ENCODE measurements at regions of chr19 and their contacts with region 1.

Region 1: DNA sequence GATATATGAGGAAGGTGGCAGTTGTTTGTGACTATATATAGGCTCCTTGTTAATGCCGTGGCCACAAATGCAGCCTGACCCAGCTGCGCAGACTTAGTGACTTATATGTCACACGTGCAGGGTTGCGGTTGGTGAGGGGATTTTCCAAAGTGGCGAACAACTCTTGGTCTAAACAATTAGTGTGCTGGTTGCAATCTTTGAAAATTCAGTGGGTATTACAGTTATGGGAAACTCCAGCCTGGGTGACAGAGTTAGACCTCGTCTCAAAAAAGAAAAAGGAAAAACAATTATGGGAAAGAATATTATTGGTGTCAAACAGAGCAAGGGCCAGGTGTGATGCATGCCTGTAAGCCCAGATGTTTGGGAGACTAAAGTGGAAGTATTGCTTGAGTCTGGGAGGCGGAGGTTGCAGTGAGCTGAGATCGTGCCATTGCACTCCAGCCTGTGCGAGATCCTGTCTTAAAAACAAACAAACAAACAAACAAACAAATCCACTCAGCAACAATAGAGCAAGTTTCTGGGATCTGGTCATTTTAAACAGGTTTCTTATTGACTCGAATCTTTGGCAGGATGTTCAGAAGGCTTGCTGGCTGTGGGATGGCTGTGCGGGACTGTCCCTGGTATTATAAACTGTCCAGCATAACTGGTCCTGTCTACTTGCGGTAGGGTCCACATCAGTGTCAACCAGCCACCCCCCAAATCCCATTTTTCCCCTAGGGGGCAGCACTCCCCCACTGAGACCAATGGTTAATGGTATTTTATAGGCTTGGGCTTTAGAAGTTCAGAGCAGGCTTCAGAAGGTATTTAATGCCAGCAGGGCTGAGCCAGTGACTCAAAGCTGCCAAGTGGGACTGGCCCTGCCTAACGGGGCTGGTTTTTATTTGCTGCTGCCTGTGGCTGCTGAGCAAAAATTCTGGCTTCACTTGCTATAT is 15.4 kb downstream of the RELB start:
- DNase-seq: peak; percentile 42
- ATAC-seq: peak; percentile 89
- H3K4me3 ChIP-seq: no peak overlapping the region
- H3K27ac ChIP-seq: no peak overlapping the region
- H3K4me1 ChIP-seq: peaks cover 5 to 10% of the 10 kb centered on the region in 2 experiments; a peak in 2 of 4 replicates
- H3K27me3 ChIP-seq: no peaks in the 10 kb centered on the region
- CTCF ChIP-seq: peak; percentile 78 to 86 (median 79)
- POLR2A ChIP-seq: no peak
- RAD21 ChIP-seq: peak; percentile 87

Region 2: DNA sequence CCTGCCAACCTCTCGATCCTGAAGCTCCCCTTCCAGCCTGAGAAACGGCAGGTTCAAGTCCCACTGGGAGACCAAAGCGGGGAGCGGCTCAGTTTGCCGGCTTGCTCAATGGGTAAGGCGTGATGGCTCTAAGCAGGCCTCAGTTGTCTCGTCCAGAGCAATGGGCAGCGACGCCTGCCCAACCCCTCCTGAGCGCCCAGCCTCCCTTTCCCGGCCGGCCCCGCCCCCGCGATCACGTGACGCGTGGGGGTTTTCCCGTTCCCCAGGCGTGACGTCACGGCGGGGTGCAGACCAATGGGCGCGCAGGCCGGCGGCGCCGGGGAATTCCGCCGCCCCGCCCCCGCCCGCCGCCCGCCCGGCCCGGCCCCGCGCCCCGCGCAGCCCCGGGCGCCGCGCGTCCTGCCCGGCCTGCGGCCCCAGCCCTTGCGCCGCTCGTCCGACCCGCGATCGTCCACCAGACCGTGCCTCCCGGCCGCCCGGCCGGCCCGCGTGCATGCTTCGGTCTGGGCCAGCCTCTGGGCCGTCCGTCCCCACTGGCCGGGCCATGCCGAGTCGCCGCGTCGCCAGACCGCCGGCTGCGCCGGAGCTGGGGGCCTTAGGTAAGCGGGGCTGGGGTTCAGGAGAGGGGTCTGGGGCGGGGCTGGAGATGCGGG is 15.4 kb before region 1 on chr19 and contains the start of gene RELB:
- CTCF ChIA-PET with region 1: no interaction called
- POLR2A ChIA-PET with region 1: no interaction called
- RAD21 ChIA-PET with region 1: no interaction called
- intact Hi-C with region 1: no loop called
- DNase-seq: peak; percentile 72
- ATAC-seq: peak; percentile 75
- H3K4me3 ChIP-seq: peak within 1 kb of the TSS; percentile 67 to 71
- H3K27ac ChIP-seq: peak within 1 kb of the TSS; percentile 76
- H3K4me1 ChIP-seq: peaks cover 12 to 16% of the 10 kb centered on the region in 2 experiments; a peak in 3 of 4 replicates
- H3K27me3 ChIP-seq: no peaks in the 10 kb centered on the region
- CTCF ChIP-seq: no peak
- POLR2A ChIP-seq: no peak
- RAD21 ChIP-seq: no peak
- total RNA-seq, gene RELB: 12.9 TPM

Region 3: DNA sequence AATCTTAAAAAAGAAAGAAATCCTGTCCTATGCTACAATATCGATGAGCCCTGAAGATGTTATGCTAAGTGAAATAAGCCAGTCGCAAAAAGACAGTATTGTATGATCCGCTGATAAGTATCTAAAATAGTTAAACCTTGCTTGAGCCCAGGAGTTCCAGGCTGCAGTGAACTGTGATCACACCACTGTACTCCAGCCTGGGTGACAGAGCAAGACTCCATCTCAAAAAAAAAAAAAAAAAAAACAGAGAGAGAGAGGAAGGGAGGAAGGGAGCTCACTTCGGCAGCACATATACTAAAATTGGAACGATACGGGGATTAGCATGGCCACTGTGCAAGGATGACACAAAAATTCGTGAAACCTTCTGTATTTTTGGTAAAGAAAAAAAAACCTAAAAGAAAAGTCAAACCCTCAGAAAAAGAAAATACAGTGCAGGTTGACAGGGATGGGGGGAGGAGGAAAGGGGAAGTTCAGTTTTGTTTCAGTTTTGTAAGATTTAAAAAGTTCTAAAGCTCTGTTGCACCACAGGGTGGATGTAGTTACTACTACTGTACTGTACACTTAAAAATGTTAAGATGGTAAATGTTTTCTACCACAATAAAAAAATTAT is 30.6 kb after region 1 on chr19:
- CTCF ChIA-PET with region 1: no interaction called
- POLR2A ChIA-PET with region 1: no interaction called
- RAD21 ChIA-PET with region 1: no interaction called
- intact Hi-C with region 1: no loop called
- DNase-seq: no peak
- ATAC-seq: no peak
- H3K4me3 ChIP-seq: no peak overlapping the region
- H3K27ac ChIP-seq: no peak overlapping the region
- H3K4me1 ChIP-seq: peaks cover 7 to 27% of the 10 kb centered on the region in 2 experiments
- H3K27me3 ChIP-seq: no peaks in the 10 kb centered on the region
- CTCF ChIP-seq: no peak
- POLR2A ChIP-seq: no peak
- RAD21 ChIP-seq: no peak

Region 4: DNA sequence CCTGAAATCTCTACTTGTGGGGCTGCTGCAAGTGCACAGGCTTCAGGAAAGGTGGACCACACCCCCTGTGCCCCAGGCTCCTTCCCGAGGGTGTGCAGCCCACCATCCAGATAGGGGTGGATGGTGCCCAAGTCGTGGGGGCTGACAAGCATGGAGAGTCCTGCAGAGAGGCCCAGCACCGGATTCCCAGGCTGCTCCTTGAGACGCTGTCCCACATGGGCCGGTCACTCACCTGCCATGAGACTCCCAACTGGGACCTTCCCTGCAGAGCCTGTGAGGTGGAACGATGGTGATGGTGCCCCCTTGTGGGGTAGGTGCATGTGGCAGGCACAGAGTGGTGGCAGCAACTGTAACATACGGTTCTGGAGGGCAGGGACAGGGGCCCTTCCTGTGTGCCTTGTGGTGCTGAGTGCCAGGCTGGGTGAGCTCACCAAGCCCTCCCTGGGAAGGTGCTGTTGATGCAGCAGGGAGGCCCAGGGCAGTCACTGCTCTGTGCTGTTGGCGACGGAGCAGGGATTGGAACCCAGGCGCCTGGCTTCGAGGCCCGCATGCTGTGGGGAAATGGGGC is 109.4 kb after region 1 on chr19:
- CTCF ChIA-PET with region 1: interaction called, 4 read pairs
- POLR2A ChIA-PET with region 1: no interaction called
- RAD21 ChIA-PET with region 1: no interaction called
- intact Hi-C with region 1: loop called (anchors 2 kb)
- DNase-seq: peak; percentile 24
- ATAC-seq: peak; percentile 95
- H3K4me3 ChIP-seq: no peak overlapping the region
- H3K27ac ChIP-seq: no peak overlapping the region; the same call in 1 of the 2 replicates
- H3K4me1 ChIP-seq: peaks cover 8 to 19% of the 10 kb centered on the region in 2 experiments
- H3K27me3 ChIP-seq: no peaks in the 10 kb centered on the region
- CTCF ChIP-seq: peak; percentile 67 to 93 (median 78)
- POLR2A ChIP-seq: no peak
- RAD21 ChIP-seq: peak; percentile 65; the same call in 1 of the 2 replicates

Region 5: DNA sequence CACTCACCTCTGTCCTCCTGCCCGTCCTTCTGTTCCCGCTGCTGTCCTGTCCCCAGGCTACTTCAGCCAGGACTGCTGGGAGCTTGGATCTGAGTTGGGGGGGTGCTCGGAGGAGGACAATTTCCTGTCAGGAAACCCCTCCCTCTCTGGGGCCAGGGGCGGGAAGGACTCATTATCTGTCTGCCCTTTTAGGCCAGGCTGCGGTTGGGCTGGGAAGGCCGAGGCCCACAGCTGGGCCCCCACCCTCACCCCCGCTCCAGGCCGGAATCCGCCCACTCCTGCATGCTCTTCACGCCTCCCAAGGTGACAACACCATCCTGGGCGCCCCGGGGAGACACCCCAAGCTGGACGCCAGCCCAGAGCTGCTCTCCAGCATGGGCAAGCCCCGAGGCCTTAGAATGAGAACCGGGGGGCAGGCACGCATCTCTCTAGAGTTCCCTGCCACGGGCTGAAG is 228.7 kb after region 1 on chr19 and contains the start of gene EXOC3L2:
- CTCF ChIA-PET with region 1: no interaction called
- POLR2A ChIA-PET with region 1: no interaction called
- RAD21 ChIA-PET with region 1: no interaction called
- intact Hi-C with region 1: loop called (anchors 5 kb)
- DNase-seq: no peak
- ATAC-seq: no peak
- H3K4me3 ChIP-seq: no peak within 1 kb of the TSS
- H3K27ac ChIP-seq: no peak within 1 kb of the TSS
- H3K4me1 ChIP-seq: peaks cover 4 to 11% of the 10 kb centered on the region in 2 experiments; a peak in 3 of 4 replicates
- H3K27me3 ChIP-seq: no peaks in the 10 kb centered on the region
- CTCF ChIP-seq: no peak
- POLR2A ChIP-seq: no peak
- RAD21 ChIP-seq: no peak
- total RNA-seq, gene EXOC3L2: not detected